ENCODE measurements at regions of chr5 and their contacts with region 1.

Region 1: GRCh38 chr5:54772684-54773083 is 212.7 kb downstream of the ESM1 start:
- DNase-seq: peak; percentile 69
- ATAC-seq: peak; percentile 75
- H3K4me3 ChIP-seq: no peak overlapping the region
- H3K4me3 Mint-ChIP-seq: peak overlapping the region; percentile 62
- H3K27ac ChIP-seq: peak overlapping the region; percentile 69 to 84
- H3K27ac Mint-ChIP-seq: peak overlapping the region; percentile 90
- H3K4me1 ChIP-seq: peaks cover 40 to 49% of the 10 kb centered on the region in 2 donors
- H3K4me1 Mint-ChIP-seq: peaks cover 75% of the 10 kb centered on the region
- H3K27me3 ChIP-seq: no peaks in the 10 kb centered on the region
- H3K27me3 Mint-ChIP-seq: peaks cover 2% of the 10 kb centered on the region
- CTCF ChIP-seq: no peak

Region 2: DNA sequence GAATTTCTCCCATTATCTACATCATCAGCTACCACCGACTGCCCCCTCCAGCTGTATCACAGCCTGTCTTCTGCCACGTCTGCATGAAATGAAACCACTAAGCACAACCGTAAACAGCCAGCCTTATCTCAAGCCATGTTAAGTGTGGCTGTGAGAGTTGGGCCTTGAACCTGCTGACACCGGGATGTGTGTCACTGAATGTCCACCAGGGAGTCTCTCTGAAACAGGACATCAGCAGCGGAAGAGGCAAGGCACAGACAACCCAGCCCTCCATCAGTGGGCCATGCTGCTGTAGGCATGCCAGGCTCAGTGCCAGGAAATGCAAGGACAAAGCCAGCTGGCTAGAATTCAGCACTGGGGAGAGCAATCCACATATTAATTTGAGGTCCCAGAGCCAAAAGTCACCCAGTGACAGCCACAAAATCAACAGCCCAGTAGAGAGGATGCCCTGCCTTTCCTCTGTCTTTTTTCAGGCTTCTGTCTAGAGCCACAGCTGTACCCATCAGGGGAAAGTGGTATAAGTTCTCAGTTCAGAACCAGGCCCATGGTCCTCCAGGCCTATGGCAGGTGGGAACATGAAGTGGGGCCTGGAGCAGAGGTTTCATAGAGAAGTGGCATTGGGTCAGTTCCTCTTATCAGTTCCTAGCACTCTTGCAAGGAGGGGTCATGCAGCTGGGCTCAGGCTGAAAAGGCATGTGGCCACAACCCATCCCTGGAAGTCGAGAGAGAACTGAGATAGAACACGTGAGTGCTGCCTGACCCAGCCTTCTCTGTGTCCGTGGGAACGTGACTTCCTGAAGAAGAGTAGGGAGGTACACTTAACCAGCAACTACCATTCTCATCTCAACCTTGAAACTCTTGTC is 13.3 kb after region 1 on chr5:
- CTCF ChIA-PET with region 1: interaction called, 4 read pairs
- POLR2A ChIA-PET with region 1: no interaction called
- intact Hi-C with region 1: loop called (anchors 1 kb)
- DNase-seq: peak; percentile 76
- ATAC-seq: peak; percentile 92
- H3K4me3 ChIP-seq: no peak overlapping the region
- H3K4me3 Mint-ChIP-seq: peak overlapping the region; percentile 24
- H3K27ac ChIP-seq: peak overlapping the region; percentile 58 to 62
- H3K27ac Mint-ChIP-seq: peak overlapping the region; percentile 83
- H3K4me1 ChIP-seq: peaks cover 21% of the 10 kb centered on the region in 2 donors
- H3K4me1 Mint-ChIP-seq: peaks cover 29% of the 10 kb centered on the region
- H3K27me3 ChIP-seq: no peaks in the 10 kb centered on the region
- H3K27me3 Mint-ChIP-seq: no peaks in the 10 kb centered on the region
- CTCF ChIP-seq: no peak

Region 3: GRCh38 chr5:54832858-54833257 is 60.2 kb after region 1 on chr5:
- CTCF ChIA-PET with region 1: no interaction called
- POLR2A ChIA-PET with region 1: no interaction called
- intact Hi-C with region 1: no loop called
- DNase-seq: peak; percentile 62
- ATAC-seq: peak; percentile 85
- H3K4me3 ChIP-seq: no peak overlapping the region
- H3K4me3 Mint-ChIP-seq: peak overlapping the region; percentile 46
- H3K27ac ChIP-seq: peak overlapping the region; percentile 48 to 83
- H3K27ac Mint-ChIP-seq: peak overlapping the region; percentile 75
- H3K4me1 ChIP-seq: peaks cover 25% of the 10 kb centered on the region in 2 donors
- H3K4me1 Mint-ChIP-seq: peaks cover 38% of the 10 kb centered on the region
- H3K27me3 ChIP-seq: no peaks in the 10 kb centered on the region
- H3K27me3 Mint-ChIP-seq: no peaks in the 10 kb centered on the region
- CTCF ChIP-seq: no peak